HAP-1 (cell line): ENCODE measurements at regions of chr4 and their contacts with region 1.

Region 1: DNA sequence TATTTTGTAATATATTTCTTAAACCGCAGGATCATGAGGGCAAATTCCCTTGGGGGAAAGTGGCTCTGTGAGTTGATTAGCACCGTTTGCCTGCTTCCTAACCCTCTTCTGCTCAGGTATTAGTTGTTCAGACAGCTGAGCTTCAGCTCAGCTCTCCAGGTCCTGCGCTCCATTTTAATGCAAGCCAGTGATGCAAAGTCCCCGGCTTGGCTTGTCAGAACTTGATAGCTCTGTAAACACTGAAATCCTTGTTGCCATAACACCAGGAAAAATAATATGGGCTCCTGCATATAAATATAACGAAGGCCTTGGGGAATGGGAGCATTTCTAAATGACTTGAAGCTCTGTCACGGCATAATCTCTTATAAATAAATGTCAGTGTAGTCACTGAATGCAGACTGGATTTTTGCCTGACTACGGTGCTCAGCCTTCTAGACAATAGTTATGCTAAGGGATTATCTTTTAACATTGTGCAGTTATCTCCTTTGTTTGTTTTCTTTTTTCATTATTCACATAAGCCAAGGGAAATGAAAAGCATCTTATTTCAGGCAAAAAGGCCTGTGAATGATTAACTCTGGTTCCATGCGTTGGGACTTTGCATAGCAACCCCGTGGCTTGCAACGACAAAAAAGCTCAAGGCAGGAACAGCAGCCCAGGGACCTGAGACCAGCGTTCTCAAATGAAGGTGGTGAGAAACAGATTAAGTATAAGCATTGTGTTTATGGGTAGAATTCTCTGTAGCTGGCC is 253.2 kb downstream of the SPRY1 start:
- DNase-seq: peak; percentile 87 to 100
- H3K4me3 ChIP-seq: no peak overlapping the region
- H3K4me1 ChIP-seq: peaks cover 16% of the 10 kb centered on the region
- H3K27me3 ChIP-seq: no peaks in the 10 kb centered on the region

Region 2: GRCh38 chr4:123396307-123397143 is 253.3 kb before region 1 on chr4 and contains the start of gene SPRY1:
- in situ Hi-C with region 1: loop called (anchors 25 kb)
- DNase-seq: peak; percentile 91 to 95
- H3K4me3 ChIP-seq: peak within 1 kb of the TSS; percentile 33
- H3K4me1 ChIP-seq: peaks cover 8% of the 10 kb centered on the region
- H3K27me3 ChIP-seq: no peaks in the 10 kb centered on the region